Naive thymus-derived CD4-positive, alpha-beta T cell (primary cell): ENCODE measurements at regions of chr12 and their contacts with region 1.

Region 1: GRCh38 chr12:110698171-110698902 is 9.4 kb upstream of the HVCN1 start:
- DNase-seq: peak; percentile 51 to 87 (median 77)
- ATAC-seq: peak; percentile 96
- H3K4me3 ChIP-seq: no peak overlapping the region
- H3K4me3 Mint-ChIP-seq: peak overlapping the region in 4 of 10 donors; percentile 14 to 69 (median 34)
- H3K27ac ChIP-seq: no peak overlapping the region
- H3K27ac Mint-ChIP-seq: peak overlapping the region in 6 of 9 donors; percentile 49 to 88 (median 74)
- H3K4me1 ChIP-seq: peaks cover 7 to 10% of the 10 kb centered on the region in 2 donors
- H3K4me1 Mint-ChIP-seq: peaks cover 5 to 25% (median 18%) of the 10 kb centered on the region in 7 donors
- H3K27me3 ChIP-seq: no peaks in the 10 kb centered on the region
- H3K27me3 Mint-ChIP-seq: no peaks in the 10 kb centered on the region

Region 2: GRCh38 chr12:110508071-110508586 is 190.2 kb before region 1 on chr12:
- CTCF ChIA-PET with region 1: no interaction called
- POLR2A ChIA-PET with region 1: no interaction called
- intact Hi-C with region 1: loop called (anchors 1 kb)
- DNase-seq: no peak
- ATAC-seq: no peak
- H3K4me3 ChIP-seq: no peak overlapping the region
- H3K4me3 Mint-ChIP-seq: no peak overlapping the region
- H3K27ac ChIP-seq: no peak overlapping the region
- H3K27ac Mint-ChIP-seq: no peak overlapping the region
- H3K4me1 ChIP-seq: no peaks in the 10 kb centered on the region
- H3K4me1 Mint-ChIP-seq: peaks cover 0 to 3% (median 0%) of the 10 kb centered on the region in 7 donors
- H3K27me3 ChIP-seq: no peaks in the 10 kb centered on the region
- H3K27me3 Mint-ChIP-seq: peaks cover 0 to 5% (median 0%) of the 10 kb centered on the region in 5 donors

Region 3: DNA sequence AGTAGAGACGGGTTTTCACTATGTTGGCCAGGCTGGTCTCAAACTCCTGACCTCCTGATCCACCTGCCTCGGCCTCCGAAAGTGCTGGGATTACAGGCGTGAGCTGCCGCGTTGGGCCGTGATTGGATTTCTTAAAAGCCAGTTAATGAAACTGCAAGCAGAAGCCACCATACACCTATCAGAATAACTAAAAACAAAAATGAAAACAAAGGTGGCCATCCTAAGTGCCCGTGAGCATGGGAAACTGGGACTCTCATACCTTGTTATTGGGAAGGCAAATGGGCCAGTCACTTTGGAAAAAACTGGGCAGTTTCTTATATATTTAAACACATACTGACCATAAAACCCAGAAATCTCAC is 92.1 kb before region 1 on chr12:
- CTCF ChIA-PET with region 1: interaction called, 8 read pairs
- POLR2A ChIA-PET with region 1: no interaction called
- intact Hi-C with region 1: loop called (anchors 1 kb)
- DNase-seq: no peak
- ATAC-seq: no peak
- H3K4me3 ChIP-seq: peak overlapping the region; percentile 56
- H3K4me3 Mint-ChIP-seq: peak overlapping the region; percentile 83 to 94 (median 90)
- H3K27ac ChIP-seq: peak overlapping the region; percentile 45
- H3K27ac Mint-ChIP-seq: peak overlapping the region; percentile 85 to 96 (median 88)
- H3K4me1 ChIP-seq: no peaks in the 10 kb centered on the region
- H3K4me1 Mint-ChIP-seq: peaks cover 8 to 24% (median 15%) of the 10 kb centered on the region in 7 donors
- H3K27me3 ChIP-seq: no peaks in the 10 kb centered on the region
- H3K27me3 Mint-ChIP-seq: no peaks in the 10 kb centered on the region

Region 4: DNA sequence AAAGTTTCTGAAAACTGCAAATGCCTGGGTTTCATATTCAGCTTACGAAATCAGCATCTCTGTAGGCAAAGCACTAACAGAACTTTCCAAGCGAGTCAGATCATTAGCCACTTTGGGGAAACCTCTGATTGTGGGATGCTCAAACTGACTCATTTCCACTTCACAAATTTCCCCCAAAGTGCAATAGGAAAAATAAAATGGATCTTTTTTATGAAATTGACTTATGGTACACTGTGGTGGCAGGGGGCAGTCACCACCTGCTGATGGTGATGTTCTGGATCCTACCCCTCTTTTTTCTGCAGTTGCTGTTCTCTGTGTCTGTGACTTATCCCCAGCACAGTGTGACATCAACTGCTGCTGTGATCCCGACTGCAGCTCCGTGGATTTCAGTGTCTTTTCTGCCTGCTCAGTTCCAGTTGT is 78.8 kb before region 1 on chr12:
- CTCF ChIA-PET with region 1: interaction called, 13 read pairs
- POLR2A ChIA-PET with region 1: no interaction called
- intact Hi-C with region 1: loop called (anchors 1 kb)
- DNase-seq: peak in 2 of 9 donors; percentile 15 to 26
- ATAC-seq: no peak
- H3K4me3 ChIP-seq: no peak overlapping the region
- H3K4me3 Mint-ChIP-seq: no peak overlapping the region
- H3K27ac ChIP-seq: no peak overlapping the region
- H3K27ac Mint-ChIP-seq: no peak overlapping the region
- H3K4me1 ChIP-seq: peaks cover under 1 to 1% of the 10 kb centered on the region in 2 donors
- H3K4me1 Mint-ChIP-seq: peaks cover 0 to 11% (median under 1%) of the 10 kb centered on the region in 7 donors
- H3K27me3 ChIP-seq: no peaks in the 10 kb centered on the region
- H3K27me3 Mint-ChIP-seq: no peaks in the 10 kb centered on the region

Region 5: DNA sequence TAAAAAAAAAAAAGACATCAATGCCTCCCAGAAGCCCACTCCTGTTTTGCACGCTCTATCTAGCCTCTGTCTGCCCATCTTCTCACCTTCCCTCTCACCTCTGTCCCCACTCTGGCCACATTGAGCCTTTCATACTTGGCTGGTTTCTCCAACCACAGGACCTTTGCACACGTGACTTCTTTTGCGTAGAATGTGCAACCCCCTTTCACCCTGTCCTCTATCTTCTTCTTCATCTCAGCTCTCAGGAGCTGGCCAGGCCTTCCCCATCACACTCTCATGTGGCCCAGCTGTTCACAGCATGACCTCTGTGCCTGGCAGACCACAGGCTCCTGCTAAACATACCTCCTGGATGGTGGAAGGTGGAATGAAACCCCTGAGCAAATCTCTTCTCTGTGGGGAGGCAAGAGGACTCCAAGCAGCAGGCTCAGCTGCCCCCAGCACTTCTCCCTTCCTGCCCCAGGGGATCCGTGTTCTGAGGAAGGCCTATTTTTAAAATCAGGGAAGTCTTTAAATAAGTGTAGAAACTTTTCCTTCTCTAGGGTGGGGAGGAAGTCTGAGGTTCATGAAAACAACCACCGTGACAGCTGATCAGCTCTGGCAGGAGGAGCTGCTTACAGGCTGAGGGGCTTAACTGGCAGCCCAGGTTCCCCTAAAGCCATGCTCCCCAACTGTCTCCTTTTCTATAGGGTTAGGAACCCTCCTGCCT is 21.0 kb before region 1 on chr12:
- CTCF ChIA-PET with region 1: interaction called, 6 read pairs
- POLR2A ChIA-PET with region 1: interaction called, 3 read pairs
- intact Hi-C with region 1: loop called in 1 of 2 experiments (anchors 2 kb)
- DNase-seq: peak in 2 of 9 donors; percentile 16 to 17
- ATAC-seq: peak; percentile 61
- H3K4me3 ChIP-seq: peak overlapping the region; percentile 1
- H3K4me3 Mint-ChIP-seq: peak overlapping the region; percentile 34 to 80 (median 60)
- H3K27ac ChIP-seq: peak overlapping the region; percentile 16
- H3K27ac Mint-ChIP-seq: peak overlapping the region; percentile 29 to 91 (median 84)
- H3K4me1 ChIP-seq: peaks cover 15 to 23% of the 10 kb centered on the region in 2 donors
- H3K4me1 Mint-ChIP-seq: peaks cover 31 to 53% (median 44%) of the 10 kb centered on the region in 7 donors
- H3K27me3 ChIP-seq: no peaks in the 10 kb centered on the region
- H3K27me3 Mint-ChIP-seq: no peaks in the 10 kb centered on the region

Region 6: GRCh38 chr12:110807640-110808039 is 109.3 kb after region 1 on chr12:
- CTCF ChIA-PET with region 1: no interaction called
- POLR2A ChIA-PET with region 1: no interaction called
- intact Hi-C with region 1: no loop called
- DNase-seq: no peak
- ATAC-seq: no peak
- H3K4me3 ChIP-seq: no peak overlapping the region
- H3K4me3 Mint-ChIP-seq: no peak overlapping the region
- H3K27ac ChIP-seq: no peak overlapping the region
- H3K27ac Mint-ChIP-seq: no peak overlapping the region
- H3K4me1 ChIP-seq: peaks cover 0 to 8% of the 10 kb centered on the region in 2 donors
- H3K4me1 Mint-ChIP-seq: peaks cover 4 to 12% (median 10%) of the 10 kb centered on the region in 7 donors
- H3K27me3 ChIP-seq: no peaks in the 10 kb centered on the region
- H3K27me3 Mint-ChIP-seq: peaks cover 0 to 6% (median 0%) of the 10 kb centered on the region in 5 donors

Region 7: GRCh38 chr12:110888256-110888991 is 190.1 kb after region 1 on chr12:
- CTCF ChIA-PET with region 1: interaction called, 4 read pairs
- POLR2A ChIA-PET with region 1: no interaction called
- intact Hi-C with region 1: loop called (anchors 1 to 10 kb)
- DNase-seq: no peak
- ATAC-seq: no peak
- H3K4me3 ChIP-seq: no peak overlapping the region
- H3K4me3 Mint-ChIP-seq: peak overlapping the region; percentile 51 to 97 (median 92)
- H3K27ac ChIP-seq: no peak overlapping the region
- H3K27ac Mint-ChIP-seq: peak overlapping the region in 5 of 9 donors; percentile 69 to 91 (median 77)
- H3K4me1 ChIP-seq: peaks cover 0 to 4% of the 10 kb centered on the region in 2 donors
- H3K4me1 Mint-ChIP-seq: peaks cover 0 to 8% (median 4%) of the 10 kb centered on the region in 7 donors
- H3K27me3 ChIP-seq: no peaks in the 10 kb centered on the region
- H3K27me3 Mint-ChIP-seq: peaks cover 0 to 12% (median 0%) of the 10 kb centered on the region in 5 donors